Activated CD4-positive, alpha-beta memory T cell treated with anti-CD3 and anti-CD28 coated beads for 36 hours (primary cell): ENCODE measurements at regions of chr1 and their contacts with region 1.

Region 1: GRCh38 chr1:171801487-171801891 is 20.0 kb downstream of the METTL13 start:
- DNase-seq: no peak
- H3K4me3 Mint-ChIP-seq: no peak overlapping the region
- H3K27ac Mint-ChIP-seq: no peak overlapping the region
- H3K4me1 Mint-ChIP-seq: peaks cover 3% of the 10 kb centered on the region
- H3K27me3 Mint-ChIP-seq: no peaks in the 10 kb centered on the region

Region 2: GRCh38 chr1:171644805-171645483 is 156.5 kb before region 1 on chr1:
- CTCF ChIA-PET with region 1: interaction called, 15 read pairs
- POLR2A ChIA-PET with region 1: no interaction called
- intact Hi-C with region 1: no loop called
- DNase-seq: peak; percentile 82
- H3K4me3 Mint-ChIP-seq: no peak overlapping the region
- H3K27ac Mint-ChIP-seq: no peak overlapping the region
- H3K4me1 Mint-ChIP-seq: peaks cover 4% of the 10 kb centered on the region
- H3K27me3 Mint-ChIP-seq: no peaks in the 10 kb centered on the region

Region 3: DNA sequence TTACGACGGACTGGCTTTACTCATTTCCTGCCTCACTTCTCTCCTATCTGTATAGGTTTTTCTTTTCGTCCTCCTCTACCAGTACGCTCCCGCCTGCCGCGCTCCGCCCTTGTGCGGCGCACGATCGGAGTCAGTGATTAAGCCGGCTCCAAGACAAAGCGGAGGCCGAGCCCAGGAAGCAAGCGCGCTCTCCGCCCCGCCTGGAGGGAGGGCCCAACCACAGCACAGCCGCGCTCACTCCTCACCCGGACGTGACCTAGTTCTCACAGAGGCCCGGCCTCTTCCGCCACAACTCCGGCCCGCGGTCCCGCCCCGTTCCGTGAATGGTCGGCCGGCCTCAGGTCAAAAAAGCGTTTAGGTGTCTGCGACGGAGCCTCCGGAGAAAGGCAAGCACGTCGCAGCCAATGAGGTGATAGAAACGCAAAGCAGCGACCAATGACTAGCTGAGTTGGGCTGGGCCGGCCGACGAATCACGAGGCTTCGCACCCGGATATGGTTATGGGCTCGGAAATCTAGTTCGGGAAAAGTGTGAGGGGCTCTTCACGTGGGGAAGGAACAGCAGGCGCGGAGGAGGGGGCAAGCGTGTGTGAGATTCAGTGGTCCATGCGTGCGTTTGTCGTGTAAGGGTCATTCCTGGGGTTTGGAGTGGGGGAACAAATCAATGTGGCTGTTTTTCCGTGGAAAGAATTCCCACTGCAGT is 20.2 kb before region 1 on chr1 and contains the start of gene METTL13:
- CTCF ChIA-PET with region 1: interaction called, 19 read pairs
- POLR2A ChIA-PET with region 1: interaction called, 3 read pairs
- intact Hi-C with region 1: no loop called
- DNase-seq: peak; percentile 99
- H3K4me3 Mint-ChIP-seq: peak within 1 kb of the TSS; percentile 96
- H3K27ac Mint-ChIP-seq: peak within 1 kb of the TSS; percentile 94
- H3K4me1 Mint-ChIP-seq: peaks cover 59% of the 10 kb centered on the region
- H3K27me3 Mint-ChIP-seq: no peaks in the 10 kb centered on the region
- total RNA-seq, gene METTL13: 45.6 to 49.8 TPM

Region 4: DNA sequence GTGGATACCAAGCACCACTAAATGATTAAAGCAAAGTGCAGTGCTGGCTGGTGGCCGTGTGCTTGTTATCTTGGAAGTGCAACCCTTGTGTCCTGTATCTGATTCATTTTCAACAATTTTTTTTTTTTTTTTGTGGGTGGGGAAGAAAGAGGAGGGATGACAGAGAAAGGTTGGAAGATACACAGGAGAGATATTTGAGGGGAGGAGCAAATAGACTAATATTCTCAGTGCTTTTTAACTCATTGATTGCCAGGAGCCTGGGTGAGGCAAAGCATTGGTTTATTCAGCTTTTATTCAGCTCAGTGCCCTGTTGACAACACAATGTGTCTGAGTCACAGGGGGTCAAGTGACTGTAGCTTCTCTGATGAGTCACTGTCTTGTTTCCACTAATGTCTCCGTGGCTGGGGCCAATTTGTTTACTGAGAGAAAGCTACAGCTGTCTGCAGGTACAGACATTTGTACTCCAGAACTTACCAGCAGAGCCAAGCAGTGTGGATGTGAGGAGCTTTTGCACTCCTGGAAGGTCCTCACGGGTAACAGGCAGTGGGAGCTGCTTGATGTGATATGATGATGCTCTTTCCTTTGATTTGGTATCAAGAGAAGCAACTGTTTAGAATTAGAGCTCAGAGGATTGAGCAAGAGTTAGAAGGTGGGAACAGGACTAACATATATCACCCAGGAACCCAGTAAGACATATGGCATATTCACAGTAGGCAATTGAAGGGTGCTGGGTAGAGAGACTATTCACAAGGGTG is 16.2 kb after region 1 on chr1:
- CTCF ChIA-PET with region 1: interaction called, 10 read pairs
- POLR2A ChIA-PET with region 1: no interaction called
- intact Hi-C with region 1: loop called (anchors 2 kb)
- DNase-seq: peak; percentile 70
- H3K4me3 Mint-ChIP-seq: no peak overlapping the region
- H3K27ac Mint-ChIP-seq: peak overlapping the region; percentile 61
- H3K4me1 Mint-ChIP-seq: peaks cover 15% of the 10 kb centered on the region
- H3K27me3 Mint-ChIP-seq: no peaks in the 10 kb centered on the region

Region 5: DNA sequence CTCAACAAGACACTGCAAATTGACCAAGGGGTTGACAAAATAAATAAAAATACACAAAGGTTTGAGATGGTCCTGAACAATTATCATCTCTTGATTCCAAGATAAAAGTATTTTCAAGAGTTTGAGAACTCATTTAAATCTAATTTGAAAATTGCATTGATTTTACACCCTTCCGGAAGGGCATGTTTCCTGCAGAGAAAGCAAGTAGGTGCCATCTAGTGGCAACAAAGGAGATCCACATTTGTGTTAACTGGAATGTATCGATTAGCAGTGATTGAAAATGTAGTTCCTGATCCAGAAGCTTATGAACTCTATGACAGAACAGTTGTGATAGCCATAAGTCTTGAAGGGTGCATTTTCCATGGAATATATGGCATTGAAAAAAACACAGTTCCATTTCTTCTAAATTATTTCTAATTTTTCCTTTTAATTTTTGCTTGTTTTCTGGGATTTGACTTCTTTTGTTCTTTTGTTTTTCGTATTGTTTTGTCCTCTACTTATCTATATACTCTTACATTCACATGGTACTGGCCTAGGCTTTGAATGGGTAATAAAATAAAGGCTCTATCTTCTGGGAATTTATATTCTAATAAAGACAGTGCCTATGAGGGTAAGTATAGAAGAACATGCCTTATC is 183.5 kb after region 1 on chr1:
- CTCF ChIA-PET with region 1: interaction called, 238 read pairs
- POLR2A ChIA-PET with region 1: interaction called, 5 read pairs
- intact Hi-C with region 1: loop called (anchors 1 kb)
- DNase-seq: no peak
- H3K4me3 Mint-ChIP-seq: no peak overlapping the region
- H3K27ac Mint-ChIP-seq: no peak overlapping the region
- H3K4me1 Mint-ChIP-seq: no peaks in the 10 kb centered on the region
- H3K27me3 Mint-ChIP-seq: peaks cover 1% of the 10 kb centered on the region